ENCODE measurements at regions of chr14 and their contacts with region 1.

Region 1: DNA sequence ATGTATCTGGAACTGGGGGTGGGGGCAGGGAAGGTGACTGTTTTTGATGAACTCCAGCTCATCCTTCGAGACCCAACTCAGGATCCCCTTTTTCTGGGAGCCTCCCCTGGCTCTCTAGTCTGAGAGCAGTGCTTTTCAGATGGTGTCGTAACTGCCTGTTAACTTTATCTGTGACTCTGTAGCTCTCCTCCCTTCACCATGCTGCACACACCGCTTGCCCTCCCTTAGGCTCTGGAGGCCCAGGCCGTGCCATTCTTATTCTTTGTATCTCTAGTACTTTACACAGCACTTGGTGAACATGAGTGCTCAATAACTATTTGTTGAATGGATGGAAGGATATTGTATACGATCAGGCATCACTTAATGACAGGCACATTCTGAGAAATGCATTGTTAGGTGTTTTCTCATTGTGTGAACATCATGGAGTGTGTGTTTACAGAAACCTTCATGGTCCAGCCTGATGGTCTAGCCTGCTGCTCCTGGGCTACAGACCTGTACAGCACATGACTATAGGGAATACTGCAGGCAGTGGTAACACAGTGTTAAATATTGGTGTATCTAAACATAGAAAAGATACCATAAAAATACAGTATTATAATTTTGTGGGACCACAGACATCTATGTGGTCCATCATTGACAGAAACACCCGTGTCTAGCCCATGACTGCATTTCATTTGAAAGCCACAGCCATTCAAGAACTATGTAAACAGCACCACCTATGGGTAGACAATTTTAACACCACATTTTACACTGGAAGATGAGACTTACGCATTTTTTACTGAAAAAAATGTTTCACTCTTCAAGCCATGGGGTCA is 91.8 kb downstream of the EML1 start:
- DNase-seq: peak; percentile 81
- H3K4me3 ChIP-seq: no peak overlapping the region
- H3K27ac ChIP-seq: peak overlapping the region; percentile 62
- H3K4me1 ChIP-seq: peaks cover 32% of the 10 kb centered on the region
- H3K27me3 ChIP-seq: no peaks in the 10 kb centered on the region
- CTCF ChIP-seq: peak; percentile 82

Region 2: GRCh38 chr14:99518441-99519346 is 366.3 kb before region 1 on chr14:
- CTCF ChIA-PET with region 1: no interaction called
- POLR2A ChIA-PET with region 1: no interaction called
- intact Hi-C with region 1: loop called (anchors 5 kb)
- DNase-seq: peak; percentile 67
- H3K4me3 ChIP-seq: no peak overlapping the region
- H3K27ac ChIP-seq: no peak overlapping the region
- H3K4me1 ChIP-seq: no peaks in the 10 kb centered on the region
- H3K27me3 ChIP-seq: no peaks in the 10 kb centered on the region
- CTCF ChIP-seq: peak; percentile 98

Region 3: DNA sequence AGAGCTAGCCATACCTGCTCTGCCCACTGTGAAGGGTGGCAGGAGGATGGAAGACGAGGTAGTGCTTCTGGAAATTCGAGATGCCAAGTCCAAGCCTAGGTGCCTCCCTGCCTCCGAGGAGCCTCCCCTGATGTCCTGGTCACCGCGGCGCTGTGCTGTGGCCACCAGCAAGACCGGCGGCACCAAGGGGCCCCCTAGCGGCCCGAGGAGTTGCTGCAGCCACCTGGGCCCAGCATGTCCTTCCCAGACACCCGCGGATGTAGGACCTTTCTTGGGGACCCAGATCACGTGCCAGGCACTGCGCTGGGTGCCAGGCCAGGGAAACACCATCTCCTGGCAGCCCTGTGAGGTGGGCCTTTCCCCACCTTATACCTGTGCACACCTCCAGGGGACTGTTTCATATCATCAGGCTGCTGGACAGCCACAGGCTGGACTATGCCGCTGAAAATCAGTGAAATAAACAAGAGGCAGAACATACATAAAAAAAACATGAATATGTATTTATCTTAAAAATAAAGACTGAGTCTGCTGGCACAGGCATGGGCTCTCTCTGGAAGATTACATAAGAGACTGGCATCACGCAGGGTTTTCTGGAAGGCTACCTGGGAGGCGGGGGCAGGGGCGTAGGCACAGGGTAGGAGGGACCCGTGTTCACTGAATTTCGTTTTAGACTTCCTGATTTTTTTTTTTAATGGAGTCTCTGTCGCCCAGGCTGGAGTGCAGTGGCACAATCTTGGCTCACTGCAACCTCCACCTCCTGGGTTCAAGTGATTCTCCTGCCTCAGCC is 256.0 kb before region 1 on chr14:
- CTCF ChIA-PET with region 1: no interaction called
- POLR2A ChIA-PET with region 1: no interaction called
- intact Hi-C with region 1: no loop called
- DNase-seq: peak; percentile 75
- H3K4me3 ChIP-seq: no peak overlapping the region
- H3K27ac ChIP-seq: no peak overlapping the region
- H3K4me1 ChIP-seq: no peaks in the 10 kb centered on the region
- H3K27me3 ChIP-seq: no peaks in the 10 kb centered on the region
- CTCF ChIP-seq: peak; percentile 99

Region 4: DNA sequence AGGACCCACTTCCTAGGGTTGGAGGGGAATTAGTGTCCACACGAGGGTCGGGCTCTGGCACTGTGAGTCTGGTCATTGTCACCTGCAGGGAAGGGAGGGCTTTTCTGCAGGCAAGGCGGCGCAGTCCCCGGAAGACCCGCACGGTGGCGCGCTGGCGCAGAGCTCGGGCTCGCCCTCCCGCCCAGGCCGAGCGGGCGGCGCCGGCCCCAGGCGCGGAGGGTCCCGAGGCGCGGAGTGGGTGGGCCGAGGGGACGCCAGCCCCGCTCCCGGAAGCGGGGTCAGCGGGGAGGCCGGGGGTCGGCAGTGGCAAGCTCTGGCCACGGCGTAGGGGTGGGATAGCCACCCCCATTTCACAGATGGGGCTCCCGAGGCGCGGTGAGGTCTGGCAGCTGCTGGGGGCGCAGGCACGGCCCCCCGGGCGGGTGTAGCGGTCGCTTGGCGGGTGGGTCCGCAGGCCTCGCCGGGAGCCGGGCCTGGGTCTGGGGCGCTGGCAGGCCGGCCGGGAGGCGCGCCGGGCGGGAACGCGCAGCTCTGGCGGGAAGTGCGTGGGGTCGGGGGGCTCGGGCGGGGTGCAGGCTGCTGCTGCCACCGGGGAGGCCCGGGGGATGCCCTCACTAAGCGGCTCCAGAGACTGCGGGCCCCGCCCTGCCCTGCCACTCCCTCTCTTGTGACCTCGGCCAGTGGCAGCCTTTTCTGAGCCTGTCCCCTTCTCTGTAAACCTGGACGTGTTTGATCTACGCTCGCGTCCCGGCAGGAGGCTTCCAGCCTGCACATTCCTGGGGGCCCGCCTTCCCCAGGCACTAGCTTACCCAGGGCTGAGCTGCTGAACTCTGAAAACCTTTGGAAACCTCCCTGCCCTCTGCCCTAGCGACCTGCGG is 154.8 kb before region 1 on chr14:
- CTCF ChIA-PET with region 1: interaction called, 11 read pairs
- POLR2A ChIA-PET with region 1: no interaction called
- intact Hi-C with region 1: loop called (anchors 1 kb)
- DNase-seq: peak; percentile 64
- H3K4me3 ChIP-seq: peak overlapping the region; percentile 59
- H3K27ac ChIP-seq: peak overlapping the region; percentile 64
- H3K4me1 ChIP-seq: no peaks in the 10 kb centered on the region
- H3K27me3 ChIP-seq: no peaks in the 10 kb centered on the region
- CTCF ChIP-seq: peak; percentile 76

Region 5: GRCh38 chr14:99793213-99794150 is 91.6 kb before region 1 on chr14 and contains the start of gene EML1:
- CTCF ChIA-PET with region 1: interaction called, 3 read pairs
- POLR2A ChIA-PET with region 1: no interaction called
- intact Hi-C with region 1: loop called (anchors 5 kb)
- DNase-seq: peak; percentile 89
- H3K4me3 ChIP-seq: peak within 1 kb of the TSS; percentile 59
- H3K27ac ChIP-seq: peak within 1 kb of the TSS; percentile 56
- H3K4me1 ChIP-seq: peaks cover 29% of the 10 kb centered on the region
- H3K27me3 ChIP-seq: no peaks in the 10 kb centered on the region
- CTCF ChIP-seq: no peak
- total RNA-seq, gene EML1: 34.1 and 39.5 TPM in 2 replicates

Region 6: DNA sequence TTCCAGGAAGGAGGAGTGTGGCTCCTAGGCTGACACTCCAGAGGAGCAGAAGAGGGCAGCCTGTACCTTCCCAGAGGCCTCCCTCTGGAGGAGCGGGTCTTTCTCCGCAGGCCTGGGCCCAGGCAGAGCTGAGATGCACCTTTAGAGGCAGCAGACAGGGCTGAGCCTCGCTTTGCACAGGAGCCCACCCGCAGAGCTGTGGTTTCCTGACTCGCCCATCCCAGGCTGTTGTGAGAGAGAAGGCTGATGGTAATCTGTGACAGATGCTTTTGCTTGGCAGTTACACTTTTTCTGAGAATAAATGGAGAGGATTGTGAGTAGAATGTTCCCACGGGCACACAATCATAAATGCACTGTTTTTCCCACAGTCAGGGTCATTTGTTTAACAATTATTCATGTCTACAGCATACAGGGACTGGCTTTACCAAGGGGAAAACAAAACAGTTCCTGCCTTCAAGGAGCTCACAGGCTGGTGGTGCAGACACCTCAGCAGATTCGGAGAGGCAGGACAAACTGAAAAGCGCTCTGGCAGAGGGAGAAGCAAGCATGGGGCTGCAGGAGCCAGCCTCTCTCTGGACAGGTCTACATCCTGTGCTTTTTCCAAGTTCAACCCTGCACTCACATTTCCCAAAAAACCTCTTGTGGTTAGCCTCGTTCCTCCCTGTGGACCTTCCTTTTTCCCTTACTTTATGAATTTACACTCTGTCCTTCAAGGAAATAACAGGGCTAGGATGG is 194.1 kb after region 1 on chr14:
- CTCF ChIA-PET with region 1: no interaction called
- POLR2A ChIA-PET with region 1: no interaction called
- intact Hi-C with region 1: no loop called
- DNase-seq: peak; percentile 87
- H3K4me3 ChIP-seq: no peak overlapping the region
- H3K27ac ChIP-seq: peak overlapping the region; percentile 67
- H3K4me1 ChIP-seq: peaks cover 18% of the 10 kb centered on the region
- H3K27me3 ChIP-seq: no peaks in the 10 kb centered on the region
- CTCF ChIP-seq: no peak; the same call in 1 of the 2 replicates

Measured in A673 (cell line).